ENCODE measurements at regions of chr10 and their contacts with region 1.

Region 1: DNA sequence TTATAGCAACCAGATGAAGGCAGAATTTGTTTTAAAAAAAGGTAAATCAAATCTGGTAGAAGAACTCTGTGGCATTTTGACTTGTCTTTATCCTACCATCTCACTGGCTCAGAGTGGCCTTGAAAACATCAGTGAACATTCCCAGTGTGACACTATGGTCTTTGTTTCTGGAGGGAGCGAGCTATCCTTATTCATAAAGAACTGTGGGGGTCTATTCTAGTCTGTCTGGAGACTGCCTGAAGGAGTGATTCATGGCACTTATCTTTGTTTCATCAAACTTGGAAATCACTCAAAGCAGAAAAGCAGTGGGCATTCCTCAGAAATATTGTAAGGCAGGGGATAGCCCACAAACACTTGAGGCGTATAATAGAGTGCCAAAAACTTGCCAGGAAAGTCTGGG is 719.1 kb downstream of the PCDH15 start:
- DNase-seq: no peak
- ATAC-seq: no peak
- H3K4me3 ChIP-seq: no peak overlapping the region
- H3K4me3 Mint-ChIP-seq: no peak overlapping the region
- H3K27ac ChIP-seq: no peak overlapping the region
- H3K27ac Mint-ChIP-seq: no peak overlapping the region
- H3K4me1 ChIP-seq: no peaks in the 10 kb centered on the region
- H3K4me1 Mint-ChIP-seq: no peaks in the 10 kb centered on the region
- H3K27me3 ChIP-seq: no peaks in the 10 kb centered on the region
- H3K27me3 Mint-ChIP-seq: no peaks in the 10 kb centered on the region
- CTCF ChIP-seq: no peak

Region 2: GRCh38 chr10:54066646-54067045 is 15.3 kb before region 1 on chr10:
- CTCF ChIA-PET with region 1: no interaction called
- POLR2A ChIA-PET with region 1: no interaction called
- intact Hi-C with region 1: loop called in 1 of 2 experiments (anchors 1 kb)
- DNase-seq: no peak
- ATAC-seq: no peak
- H3K4me3 ChIP-seq: no peak overlapping the region
- H3K4me3 Mint-ChIP-seq: no peak overlapping the region
- H3K27ac ChIP-seq: no peak overlapping the region
- H3K27ac Mint-ChIP-seq: no peak overlapping the region
- H3K4me1 ChIP-seq: no peaks in the 10 kb centered on the region
- H3K4me1 Mint-ChIP-seq: no peaks in the 10 kb centered on the region
- H3K27me3 ChIP-seq: no peaks in the 10 kb centered on the region
- H3K27me3 Mint-ChIP-seq: no peaks in the 10 kb centered on the region
- CTCF ChIP-seq: no peak

Region 3: GRCh38 chr10:54722075-54722474 is 640.1 kb after region 1 on chr10:
- CTCF ChIA-PET with region 1: no interaction called
- POLR2A ChIA-PET with region 1: no interaction called
- intact Hi-C with region 1: no loop called
- DNase-seq: no peak
- ATAC-seq: no peak
- H3K4me3 ChIP-seq: no peak overlapping the region
- H3K4me3 Mint-ChIP-seq: no peak overlapping the region
- H3K27ac ChIP-seq: no peak overlapping the region
- H3K27ac Mint-ChIP-seq: no peak overlapping the region
- H3K4me1 ChIP-seq: no peaks in the 10 kb centered on the region
- H3K4me1 Mint-ChIP-seq: no peaks in the 10 kb centered on the region
- H3K27me3 ChIP-seq: no peaks in the 10 kb centered on the region
- H3K27me3 Mint-ChIP-seq: no peaks in the 10 kb centered on the region
- CTCF ChIP-seq: no peak